Panc1 (cell line): ENCODE measurements at regions of chr9 and their contacts with region 1.

Region 1: GRCh38 chr9:15306757-15307534 is at the start of gene TTC39B:
- DNase-seq: peak; percentile 27
- ATAC-seq: peak; percentile 97
- H3K4me3 ChIP-seq: peak within 1 kb of the TSS; percentile 55 to 56
- H3K27ac ChIP-seq: no peak within 1 kb of the TSS
- H3K4me1 ChIP-seq: no peaks in the 10 kb centered on the region
- H3K27me3 ChIP-seq: no peaks in the 10 kb centered on the region
- CTCF ChIP-seq: no peak
- total RNA-seq, gene TTC39B: 1.6 TPM

Region 2: GRCh38 chr9:15317836-15318235 is 10.9 kb after region 1 on chr9:
- CTCF ChIA-PET with region 1: interaction called, 11 read pairs
- POLR2A ChIA-PET with region 1: no interaction called
- in situ Hi-C with region 1: no loop called
- intact Hi-C with region 1: no loop called
- DNase-seq: no peak
- ATAC-seq: no peak
- H3K4me3 ChIP-seq: no peak overlapping the region
- H3K27ac ChIP-seq: no peak overlapping the region
- H3K4me1 ChIP-seq: no peaks in the 10 kb centered on the region
- H3K27me3 ChIP-seq: no peaks in the 10 kb centered on the region
- CTCF ChIP-seq: no peak

Region 3: DNA sequence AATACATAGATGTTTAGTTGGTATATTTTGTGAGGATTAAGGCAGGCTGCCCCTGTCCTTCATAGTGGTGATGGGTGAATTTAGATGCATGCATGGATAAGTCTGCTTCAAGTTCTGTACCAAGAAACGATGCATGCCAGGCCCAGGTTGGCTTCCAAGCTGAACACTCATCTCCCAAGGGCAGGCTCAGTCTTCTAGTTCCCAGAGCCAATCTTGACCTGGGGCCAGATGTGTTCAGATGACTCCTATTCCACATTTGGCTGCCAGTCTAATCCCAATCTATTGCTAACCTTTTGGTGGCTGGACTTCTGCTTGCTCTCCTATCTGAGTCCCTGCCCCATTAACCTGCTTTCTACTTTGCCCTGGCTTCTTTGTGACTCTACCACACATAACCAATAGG is 97.2 kb after region 1 on chr9:
- CTCF ChIA-PET with region 1: no interaction called
- POLR2A ChIA-PET with region 1: no interaction called
- in situ Hi-C with region 1: no loop called
- intact Hi-C with region 1: no loop called
- DNase-seq: no peak
- ATAC-seq: no peak
- H3K4me3 ChIP-seq: no peak overlapping the region
- H3K27ac ChIP-seq: no peak overlapping the region
- H3K4me1 ChIP-seq: no peaks in the 10 kb centered on the region
- H3K27me3 ChIP-seq: no peaks in the 10 kb centered on the region
- CTCF ChIP-seq: no peak

Region 4: GRCh38 chr9:15422372-15423230 is 115.7 kb after region 1 on chr9 and contains the start of gene SNAPC3:
- CTCF ChIA-PET with region 1: no interaction called
- POLR2A ChIA-PET with region 1: no interaction called
- in situ Hi-C with region 1: no loop called
- intact Hi-C with region 1: loop called (anchors 10 kb)
- DNase-seq: no peak
- ATAC-seq: peak; percentile 99
- H3K4me3 ChIP-seq: peak within 1 kb of the TSS; percentile 66 to 73
- H3K27ac ChIP-seq: peak within 1 kb of the TSS; percentile 87
- H3K4me1 ChIP-seq: no peaks in the 10 kb centered on the region
- H3K27me3 ChIP-seq: no peaks in the 10 kb centered on the region
- CTCF ChIP-seq: no peak
- total RNA-seq, gene SNAPC3: 11.5 TPM

Region 5: DNA sequence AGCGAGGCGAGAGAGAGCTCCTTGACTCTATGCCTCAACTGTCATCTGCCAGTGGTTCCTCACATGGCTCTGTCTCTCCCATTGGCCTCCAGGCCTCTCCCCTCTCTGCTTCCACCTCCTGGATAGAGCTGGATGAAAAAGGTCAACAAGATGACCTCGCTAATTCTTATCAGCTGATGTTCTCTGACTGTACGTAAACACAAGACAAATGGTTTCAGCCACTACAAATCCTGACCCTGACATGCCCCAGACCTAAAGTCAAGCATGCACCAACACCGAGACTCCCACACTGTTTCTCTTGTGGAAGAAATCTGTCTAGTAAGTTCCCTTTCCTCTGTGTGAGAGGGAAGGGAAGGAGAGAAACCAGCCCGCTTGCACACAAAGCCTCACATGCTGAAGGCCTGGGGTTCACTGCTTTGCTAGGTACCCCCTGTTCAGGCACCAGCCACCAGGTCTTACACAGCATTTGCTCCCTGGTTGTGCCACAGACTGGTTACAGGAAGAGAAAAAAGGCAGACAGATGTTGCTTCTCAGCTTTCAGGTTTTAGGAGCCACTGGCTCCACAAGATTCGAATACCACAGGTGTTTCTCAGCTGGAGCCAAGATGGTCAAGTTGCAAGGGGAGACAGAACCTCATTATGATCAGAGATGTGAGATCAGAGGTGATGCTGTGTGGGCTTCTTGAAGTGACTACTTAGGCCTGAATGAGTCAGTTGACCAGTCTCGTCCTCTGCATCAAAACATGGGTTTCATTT is 838.4 kb after region 1 on chr9:
- CTCF ChIA-PET with region 1: no interaction called
- POLR2A ChIA-PET with region 1: no interaction called
- in situ Hi-C with region 1: no loop called
- intact Hi-C with region 1: no loop called
- DNase-seq: no peak
- ATAC-seq: no peak
- H3K4me3 ChIP-seq: no peak overlapping the region
- H3K27ac ChIP-seq: no peak overlapping the region
- H3K4me1 ChIP-seq: no peaks in the 10 kb centered on the region
- H3K27me3 ChIP-seq: no peaks in the 10 kb centered on the region
- CTCF ChIP-seq: no peak